ENCODE measurements at regions of chr1 and their contacts with region 1.

Region 1: DNA sequence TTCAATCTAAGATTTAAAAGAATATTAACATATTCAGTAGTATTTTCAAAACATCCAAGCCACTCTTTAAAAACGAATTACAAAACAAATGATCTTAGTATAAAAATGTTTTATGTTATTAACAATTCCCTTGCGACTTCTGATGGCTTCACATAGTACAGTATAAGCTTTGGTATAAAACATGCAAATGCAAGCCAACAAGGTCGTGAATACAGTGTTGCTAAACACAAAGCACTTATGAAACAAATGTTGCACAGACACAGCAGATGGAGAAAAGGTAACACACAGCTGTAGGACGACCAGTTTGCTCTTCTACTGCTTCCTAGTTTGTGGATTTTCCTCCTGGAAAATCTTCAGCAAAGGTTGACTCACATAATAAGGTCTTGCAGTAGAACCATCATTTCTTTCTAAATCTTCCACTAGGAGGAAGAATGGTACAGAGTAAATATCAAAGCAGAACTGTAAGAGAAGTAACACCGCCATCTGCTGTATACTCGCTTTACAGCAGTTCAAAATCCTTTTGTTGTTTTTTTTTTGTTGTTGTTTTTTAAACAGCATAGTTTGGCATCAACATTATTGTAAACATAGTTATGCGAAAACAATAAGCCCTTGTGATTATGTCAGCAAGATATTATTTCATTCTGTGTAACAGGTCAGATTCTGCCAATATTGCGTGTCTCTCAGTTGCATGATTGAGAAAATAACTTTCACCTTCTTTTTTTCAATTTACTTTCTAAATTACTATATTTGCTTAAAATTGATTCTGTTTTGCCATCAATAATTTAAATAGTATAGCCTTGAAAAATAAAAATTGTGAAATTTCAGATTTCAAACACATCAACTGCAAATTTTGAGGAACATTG is 69.5 kb downstream of the LHX8 start:
- DNase-seq: no peak
- ATAC-seq: peak; percentile 79
- H3K4me3 ChIP-seq: no peak overlapping the region
- H3K27ac ChIP-seq: no peak overlapping the region
- H3K4me1 ChIP-seq: no peaks in the 10 kb centered on the region
- H3K27me3 ChIP-seq: no peaks in the 10 kb centered on the region
- CTCF ChIP-seq: peak; percentile 60

Region 2: GRCh38 chr1:74771913-74772515 is 431.6 kb before region 1 on chr1:
- intact Hi-C with region 1: loop called (anchors 10 kb)
- DNase-seq: no peak
- ATAC-seq: peak; percentile 75
- H3K4me3 ChIP-seq: no peak overlapping the region
- H3K27ac ChIP-seq: no peak overlapping the region
- H3K4me1 ChIP-seq: no peaks in the 10 kb centered on the region
- H3K27me3 ChIP-seq: no peaks in the 10 kb centered on the region
- CTCF ChIP-seq: peak; percentile 76

Measured in upper lobe of right lung (tissue), 1 donor.